Gastrocnemius medialis (tissue), 4 donors: ENCODE measurements at regions of chr20 and their contacts with region 1.

Region 1: GRCh38 chr20:2873010-2873746 is at the start of gene PTPRA:
- DNase-seq: peak; percentile 88 to 90
- ATAC-seq: peak; percentile 96 to 97
- H3K4me3 ChIP-seq: peak within 1 kb of the TSS; percentile 74 to 99 (median 90)
- H3K27ac ChIP-seq: peak within 1 kb of the TSS; percentile 71 to 85 (median 74)
- H3K4me1 ChIP-seq: peaks cover 18 to 21% of the 10 kb centered on the region in 2 donors
- H3K27me3 ChIP-seq: no peaks in the 10 kb centered on the region
- CTCF ChIP-seq: no peak
- POLR2A ChIP-seq: peak; percentile 87 to 89
- total RNA-seq, gene PTPRA: 18.9 to 32.5 (median 27.3) TPM

Region 2: GRCh38 chr20:2663887-2664719 is 209.1 kb before region 1 on chr20 and contains the start of gene IDH3B:
- in situ Hi-C with region 1: loop called in 1 of 4 experiments (anchors 25 kb)
- intact Hi-C with region 1: loop called (anchors 10 kb)
- DNase-seq: peak; percentile 87 to 93
- ATAC-seq: peak; percentile 97 to 98
- H3K4me3 ChIP-seq: peak within 1 kb of the TSS; percentile 66 to 98 (median 83)
- H3K27ac ChIP-seq: peak within 1 kb of the TSS; percentile 86 to 89 (median 87)
- H3K4me1 ChIP-seq: peaks cover 13 to 14% of the 10 kb centered on the region in 2 donors
- H3K27me3 ChIP-seq: no peaks in the 10 kb centered on the region
- CTCF ChIP-seq: no peak
- POLR2A ChIP-seq: peak; percentile 70 to 76
- total RNA-seq, gene IDH3B: 95.5 to 176 (median 136) TPM

Region 3: DNA sequence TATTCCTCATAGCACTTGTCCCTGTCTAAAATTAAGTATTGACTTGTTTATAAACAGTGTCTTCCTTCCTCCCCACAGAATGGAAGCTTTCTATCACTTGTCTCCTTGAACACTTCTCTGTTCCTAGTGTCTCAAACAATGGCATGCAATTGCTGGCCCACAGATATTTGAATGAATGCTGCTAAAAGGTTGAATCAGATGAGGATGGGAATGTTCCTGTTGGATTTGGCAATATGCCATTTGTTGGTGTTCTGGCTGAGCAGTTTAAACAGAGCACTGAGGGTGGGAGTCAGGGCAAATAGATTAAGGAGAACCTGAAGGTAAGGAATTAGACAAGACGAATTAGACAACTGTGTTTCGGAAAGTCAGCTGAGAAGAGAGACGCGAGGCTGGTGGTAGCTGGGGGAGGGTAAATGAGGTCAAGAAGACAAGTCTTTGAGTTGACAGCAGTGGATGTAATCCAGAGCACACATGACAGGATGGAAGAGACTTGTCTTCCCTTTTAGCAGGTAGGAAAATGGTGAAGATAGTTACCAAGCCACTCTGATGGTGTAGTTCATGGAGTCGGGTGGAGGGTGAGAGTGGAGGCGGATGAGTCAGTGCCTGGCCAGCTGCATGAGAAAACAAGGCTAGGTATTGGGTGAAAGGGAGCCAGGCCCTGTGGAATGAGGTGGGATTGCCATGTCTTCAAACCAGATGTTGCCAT is 111.9 kb after region 1 on chr20:
- in situ Hi-C with region 1: no loop called
- intact Hi-C with region 1: loop called (anchors 10 kb)
- DNase-seq: no peak
- ATAC-seq: no peak
- H3K4me3 ChIP-seq: no peak overlapping the region
- H3K27ac ChIP-seq: no peak overlapping the region
- H3K4me1 ChIP-seq: peaks cover 0 to 5% of the 10 kb centered on the region in 2 donors
- H3K27me3 ChIP-seq: no peaks in the 10 kb centered on the region
- CTCF ChIP-seq: no peak
- POLR2A ChIP-seq: no peak

Region 4: GRCh38 chr20:3045816-3046676 is 172.9 kb after region 1 on chr20 and contains the start of gene MRPS26:
- in situ Hi-C with region 1: no loop called
- intact Hi-C with region 1: loop called (anchors 5 kb)
- DNase-seq: peak; percentile 79 to 84
- ATAC-seq: peak; percentile 88 to 92
- H3K4me3 ChIP-seq: peak within 1 kb of the TSS; percentile 86 to 95 (median 92)
- H3K27ac ChIP-seq: peak within 1 kb of the TSS; percentile 87 to 96 (median 93)
- H3K4me1 ChIP-seq: peaks cover 11 to 22% of the 10 kb centered on the region in 2 donors
- H3K27me3 ChIP-seq: no peaks in the 10 kb centered on the region
- CTCF ChIP-seq: no peak
- POLR2A ChIP-seq: peak; percentile 61 to 70
- total RNA-seq, gene MRPS26: 58.7 to 69.8 (median 62.8) TPM